ENCODE measurements at regions of chr11 and their contacts with region 1.

Region 1: DNA sequence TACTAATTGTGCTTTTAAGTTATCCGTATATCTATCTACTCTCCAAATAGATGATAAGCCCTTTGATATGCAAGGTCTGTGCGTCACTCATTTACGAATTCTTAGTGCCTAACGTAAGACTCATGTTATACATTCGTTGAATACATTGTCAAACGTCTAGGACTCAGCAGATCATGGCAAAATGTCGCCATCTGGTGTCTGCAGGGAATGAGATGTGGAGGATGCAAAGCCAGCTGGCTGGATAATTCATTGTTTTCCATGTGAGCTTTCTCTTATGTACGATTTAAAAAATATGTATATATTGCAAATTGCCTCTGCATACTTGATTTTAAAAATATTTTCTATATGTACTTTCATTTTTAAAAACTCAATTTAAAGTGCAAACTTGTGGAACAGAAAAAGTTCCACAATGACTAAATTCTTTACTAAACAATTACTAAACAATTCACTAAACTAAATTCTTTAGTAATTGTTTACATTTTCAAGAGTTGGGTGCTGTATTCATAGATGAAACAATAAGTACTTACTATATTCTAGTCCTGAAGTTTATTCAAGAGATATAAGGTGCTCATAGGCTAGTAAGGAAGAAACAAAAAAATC is 33.8 kb downstream of the ZNF202 start:
- DNase-seq: peak; percentile 51
- ATAC-seq: peak; percentile 57 to 61

Region 2: GRCh38 chr11:123580557-123581275 is 127.0 kb before region 1 on chr11:
- intact Hi-C with region 1: loop called (anchors 2 to 5 kb)
- DNase-seq: peak; percentile 54
- ATAC-seq: peak; percentile 50 to 74

Region 3: DNA sequence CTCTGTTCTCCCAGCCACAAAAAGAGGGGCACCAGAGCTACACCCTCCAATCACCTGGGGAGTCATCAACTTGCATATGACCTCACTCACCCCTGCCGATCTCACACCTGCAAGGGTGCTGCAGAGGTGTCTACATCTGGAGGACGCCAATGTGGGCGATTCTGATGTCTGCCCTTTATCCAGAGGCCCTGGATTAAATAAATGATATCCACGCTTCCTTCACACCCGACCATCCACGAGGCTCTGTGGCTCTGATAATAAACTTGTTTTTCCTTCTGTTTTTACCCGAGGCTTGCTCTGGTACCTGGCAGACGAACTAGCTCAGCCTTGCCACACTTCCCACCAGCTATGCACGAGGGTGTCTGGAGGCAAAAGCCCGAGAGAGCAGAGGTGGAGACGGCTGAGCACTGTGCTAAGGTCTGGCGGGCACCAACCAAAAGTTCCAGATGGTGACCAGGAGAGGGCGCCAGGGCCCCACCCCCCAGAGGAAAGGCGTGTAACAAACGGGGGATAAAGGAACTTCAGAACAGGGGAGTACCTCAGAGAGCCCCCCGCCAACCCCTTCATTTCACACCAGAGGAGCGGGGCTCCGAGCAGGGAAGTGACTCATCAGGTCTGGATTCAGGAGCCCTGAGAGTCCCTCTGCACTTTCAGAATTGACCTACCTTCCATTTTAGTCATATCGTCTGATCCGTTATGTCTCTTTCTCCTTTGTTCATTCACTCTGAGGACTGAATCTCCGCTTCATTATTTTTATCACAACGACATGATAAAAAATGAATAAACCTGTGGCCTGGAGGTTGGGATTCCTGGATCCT is 66.8 kb before region 1 on chr11:
- intact Hi-C with region 1: loop called (anchors 1 to 5 kb)
- DNase-seq: peak; percentile 50
- ATAC-seq: peak; percentile 57 to 83